B cell (primary cell): ENCODE measurements at regions of chr3 and their contacts with region 1.

Region 1: GRCh38 chr3:40179016-40179415 is 130.5 kb upstream of the EIF1B start:
- DNase-seq: peak; percentile 46
- ATAC-seq: no peak
- H3K4me3 ChIP-seq: no peak overlapping the region
- H3K4me3 Mint-ChIP-seq: no peak overlapping the region
- H3K27ac ChIP-seq: no peak overlapping the region
- H3K27ac Mint-ChIP-seq: no peak overlapping the region
- H3K4me1 ChIP-seq: no peaks in the 10 kb centered on the region
- H3K4me1 Mint-ChIP-seq: no peaks in the 10 kb centered on the region
- H3K27me3 ChIP-seq: no peaks in the 10 kb centered on the region
- H3K27me3 Mint-ChIP-seq: no peaks in the 10 kb centered on the region
- CTCF ChIP-seq: peak; percentile 77

Region 2: GRCh38 chr3:39707314-39707909 is 471.6 kb before region 1 on chr3:
- CTCF ChIA-PET with region 1: interaction called, 3 read pairs
- POLR2A ChIA-PET with region 1: no interaction called
- intact Hi-C with region 1: loop called (anchors 2 kb)
- DNase-seq: peak; percentile 17
- ATAC-seq: no peak
- H3K4me3 ChIP-seq: no peak overlapping the region
- H3K4me3 Mint-ChIP-seq: no peak overlapping the region
- H3K27ac ChIP-seq: no peak overlapping the region
- H3K27ac Mint-ChIP-seq: no peak overlapping the region
- H3K4me1 ChIP-seq: no peaks in the 10 kb centered on the region
- H3K4me1 Mint-ChIP-seq: no peaks in the 10 kb centered on the region
- H3K27me3 ChIP-seq: no peaks in the 10 kb centered on the region
- H3K27me3 Mint-ChIP-seq: peaks cover 11% of the 10 kb centered on the region
- CTCF ChIP-seq: peak; percentile 85

Region 3: GRCh38 chr3:40096661-40097111 is 82.3 kb before region 1 on chr3:
- CTCF ChIA-PET with region 1: no interaction called
- POLR2A ChIA-PET with region 1: no interaction called
- intact Hi-C with region 1: no loop called
- DNase-seq: no peak
- ATAC-seq: no peak
- H3K4me3 ChIP-seq: no peak overlapping the region
- H3K4me3 Mint-ChIP-seq: no peak overlapping the region
- H3K27ac ChIP-seq: no peak overlapping the region
- H3K27ac Mint-ChIP-seq: no peak overlapping the region
- H3K4me1 ChIP-seq: no peaks in the 10 kb centered on the region
- H3K4me1 Mint-ChIP-seq: no peaks in the 10 kb centered on the region
- H3K27me3 ChIP-seq: no peaks in the 10 kb centered on the region
- H3K27me3 Mint-ChIP-seq: peaks cover 3% of the 10 kb centered on the region
- CTCF ChIP-seq: no peak

Region 4: GRCh38 chr3:40137593-40138295 is 41.3 kb before region 1 on chr3:
- CTCF ChIA-PET with region 1: no interaction called
- POLR2A ChIA-PET with region 1: no interaction called
- intact Hi-C with region 1: no loop called
- DNase-seq: no peak
- ATAC-seq: no peak
- H3K4me3 ChIP-seq: no peak overlapping the region
- H3K4me3 Mint-ChIP-seq: no peak overlapping the region
- H3K27ac ChIP-seq: no peak overlapping the region
- H3K27ac Mint-ChIP-seq: no peak overlapping the region
- H3K4me1 ChIP-seq: no peaks in the 10 kb centered on the region
- H3K4me1 Mint-ChIP-seq: no peaks in the 10 kb centered on the region
- H3K27me3 ChIP-seq: no peaks in the 10 kb centered on the region
- H3K27me3 Mint-ChIP-seq: no peaks in the 10 kb centered on the region
- CTCF ChIP-seq: no peak

Region 5: DNA sequence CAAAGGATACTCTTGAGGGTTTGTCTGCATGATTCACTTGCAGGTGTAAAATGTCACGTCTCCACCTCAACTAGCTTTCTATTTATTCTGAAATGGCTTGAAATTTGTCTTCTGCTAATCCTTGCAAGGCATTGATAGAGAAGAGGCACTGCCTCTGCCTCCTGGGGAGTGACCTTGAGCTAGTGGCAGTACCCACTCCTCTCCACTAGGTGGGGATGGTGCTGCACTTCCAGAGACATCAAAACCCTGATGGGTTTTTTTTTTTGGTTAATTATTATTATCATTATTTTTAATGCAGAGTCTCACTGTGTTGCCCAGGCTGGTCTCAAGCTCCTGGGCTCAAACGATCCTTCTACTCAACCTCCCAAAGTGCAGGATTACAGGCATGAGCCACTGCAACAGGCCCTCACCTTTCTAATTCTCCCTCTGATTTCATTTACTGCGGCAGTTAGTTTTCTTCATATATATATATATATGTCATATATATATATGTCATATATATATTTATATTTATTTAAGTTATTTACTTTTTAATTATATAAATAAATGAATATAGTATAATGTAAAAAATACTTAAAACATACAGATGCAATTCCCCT is 12.9 kb after region 1 on chr3:
- CTCF ChIA-PET with region 1: interaction called, 92 read pairs
- POLR2A ChIA-PET with region 1: no interaction called
- intact Hi-C with region 1: no loop called
- DNase-seq: peak; percentile 60
- ATAC-seq: peak; percentile 73
- H3K4me3 ChIP-seq: no peak overlapping the region
- H3K4me3 Mint-ChIP-seq: no peak overlapping the region
- H3K27ac ChIP-seq: no peak overlapping the region
- H3K27ac Mint-ChIP-seq: no peak overlapping the region
- H3K4me1 ChIP-seq: no peaks in the 10 kb centered on the region
- H3K4me1 Mint-ChIP-seq: no peaks in the 10 kb centered on the region
- H3K27me3 ChIP-seq: no peaks in the 10 kb centered on the region
- H3K27me3 Mint-ChIP-seq: no peaks in the 10 kb centered on the region
- CTCF ChIP-seq: peak; percentile 96